HCT116 (cell line): ENCODE measurements at regions of chr3 and their contacts with region 1.

Region 1: GRCh38 chr3:19093084-19093483 is 55.2 kb upstream of the KCNH8 start:
- DNase-seq: no peak
- ATAC-seq: no peak
- H3K4me3 ChIP-seq: no peak overlapping the region
- H3K27ac ChIP-seq: no peak overlapping the region
- H3K4me1 ChIP-seq: no peaks in the 10 kb centered on the region
- H3K27me3 ChIP-seq: no peaks in the 10 kb centered on the region
- CTCF ChIP-seq: no peak
- POLR2A ChIP-seq: no peak
- RAD21 ChIP-seq: no peak

Region 2: DNA sequence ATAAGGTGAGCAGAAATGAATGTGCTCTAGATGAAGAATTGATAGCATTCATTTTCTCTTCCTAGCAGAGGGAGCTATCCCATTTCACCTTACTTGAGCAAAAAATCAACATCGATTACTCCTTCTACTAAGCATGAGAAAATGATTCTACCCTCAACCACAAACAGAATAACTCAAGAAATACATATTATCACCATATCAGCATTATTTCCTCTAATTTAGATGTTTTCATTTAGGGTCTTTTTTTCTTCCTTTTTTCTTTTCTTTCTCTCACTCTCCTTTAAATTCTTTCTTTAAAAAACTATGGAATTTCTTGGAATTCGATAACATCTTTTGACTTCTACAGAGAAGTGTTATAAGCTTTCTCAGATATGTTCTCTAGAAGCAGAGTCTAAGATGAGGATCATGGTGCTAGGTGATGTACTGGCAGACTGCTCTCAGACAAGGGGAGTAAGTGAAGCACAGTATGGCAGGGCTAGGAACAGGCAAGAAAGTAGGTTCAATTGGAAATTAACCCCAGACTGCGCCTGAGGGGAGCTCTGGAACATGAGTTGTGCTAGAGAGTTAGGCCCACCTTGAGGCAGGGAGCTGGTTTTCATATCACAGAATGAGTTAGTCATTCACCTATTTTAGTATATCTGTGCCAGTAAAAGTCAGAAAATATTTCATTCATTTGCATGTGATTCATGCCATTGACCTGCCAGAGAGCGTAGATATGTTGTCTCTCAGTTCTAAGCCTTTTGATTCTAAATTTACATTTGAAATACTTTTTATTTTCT is 224.0 kb before region 1 on chr3:
- CTCF ChIA-PET with region 1: no interaction called
- POLR2A ChIA-PET with region 1: no interaction called
- RAD21 ChIA-PET with region 1: no interaction called
- intact Hi-C with region 1: no loop called
- DNase-seq: no peak
- ATAC-seq: no peak
- H3K4me3 ChIP-seq: no peak overlapping the region
- H3K27ac ChIP-seq: no peak overlapping the region
- H3K4me1 ChIP-seq: no peaks in the 10 kb centered on the region
- H3K27me3 ChIP-seq: no peaks in the 10 kb centered on the region
- CTCF ChIP-seq: no peak
- POLR2A ChIP-seq: no peak
- RAD21 ChIP-seq: no peak

Region 3: DNA sequence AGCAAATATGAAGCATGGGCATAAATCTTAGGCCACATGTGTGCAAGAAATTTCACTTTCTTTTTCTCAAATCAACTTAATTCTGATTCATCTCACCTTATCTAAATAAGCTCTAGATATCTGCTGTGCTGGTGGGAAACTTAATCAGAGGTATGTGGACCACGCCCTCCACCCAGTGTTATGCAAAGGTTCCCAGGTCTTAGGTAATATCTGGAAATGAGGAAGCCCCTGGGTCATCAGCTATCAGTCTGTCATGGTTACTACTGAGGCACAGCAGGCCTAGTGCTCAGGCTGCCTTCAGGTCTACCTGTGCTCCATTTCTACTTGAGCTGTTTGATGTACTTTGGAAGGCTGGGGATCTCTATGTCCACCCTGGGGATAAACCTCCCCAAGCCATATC is 79.2 kb before region 1 on chr3:
- CTCF ChIA-PET with region 1: no interaction called
- POLR2A ChIA-PET with region 1: no interaction called
- RAD21 ChIA-PET with region 1: no interaction called
- intact Hi-C with region 1: loop called (anchors 2 kb)
- DNase-seq: no peak
- ATAC-seq: no peak
- H3K4me3 ChIP-seq: no peak overlapping the region
- H3K27ac ChIP-seq: no peak overlapping the region
- H3K4me1 ChIP-seq: no peaks in the 10 kb centered on the region
- H3K27me3 ChIP-seq: no peaks in the 10 kb centered on the region
- CTCF ChIP-seq: no peak
- POLR2A ChIP-seq: no peak
- RAD21 ChIP-seq: no peak

Region 4: GRCh38 chr3:19114461-19114860 is 21.4 kb after region 1 on chr3:
- CTCF ChIA-PET with region 1: no interaction called
- POLR2A ChIA-PET with region 1: no interaction called
- RAD21 ChIA-PET with region 1: no interaction called
- intact Hi-C with region 1: no loop called
- DNase-seq: no peak
- ATAC-seq: no peak
- H3K4me3 ChIP-seq: no peak overlapping the region
- H3K27ac ChIP-seq: no peak overlapping the region
- H3K4me1 ChIP-seq: no peaks in the 10 kb centered on the region
- H3K27me3 ChIP-seq: no peaks in the 10 kb centered on the region
- CTCF ChIP-seq: no peak
- POLR2A ChIP-seq: no peak
- RAD21 ChIP-seq: no peak

Region 5: DNA sequence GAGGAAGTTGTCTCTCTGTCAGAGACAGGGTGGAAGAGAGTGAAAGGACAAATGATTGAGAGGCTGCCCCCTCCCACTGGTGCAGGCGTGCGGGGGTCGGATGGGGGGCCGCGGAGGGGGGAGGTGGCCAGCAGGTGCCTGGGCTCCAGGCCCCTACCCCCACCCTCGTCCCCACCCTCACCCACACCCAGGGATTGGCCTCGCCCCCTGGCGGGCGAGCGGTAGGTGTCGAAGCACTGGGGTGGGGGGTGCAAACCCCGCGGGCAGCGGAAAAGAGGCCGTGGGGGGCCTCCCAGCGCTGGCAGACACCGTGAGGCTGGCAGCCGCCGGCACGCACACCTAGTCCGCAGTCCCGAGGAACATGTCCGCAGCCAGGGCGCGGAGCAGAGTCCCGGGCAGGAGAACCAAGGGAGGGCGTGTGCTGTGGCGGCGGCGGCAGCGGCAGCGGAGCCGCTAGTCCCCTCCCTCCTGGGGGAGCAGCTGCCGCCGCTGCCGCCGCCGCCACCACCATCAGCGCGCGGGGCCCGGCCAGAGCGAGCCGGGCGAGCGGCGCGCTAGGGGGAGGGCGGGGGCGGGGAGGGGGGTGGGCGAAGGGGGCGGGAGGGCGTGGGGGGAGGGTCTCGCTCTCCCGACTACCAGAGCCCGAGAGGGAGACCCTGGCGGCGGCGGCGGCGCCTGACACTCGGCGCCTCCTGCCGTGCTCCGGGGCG is 946.8 kb after region 1 on chr3 and contains the start of gene KAT2B:
- CTCF ChIA-PET with region 1: no interaction called
- POLR2A ChIA-PET with region 1: no interaction called
- RAD21 ChIA-PET with region 1: no interaction called
- intact Hi-C with region 1: no loop called
- DNase-seq: no peak
- ATAC-seq: peak; percentile 76
- H3K4me3 ChIP-seq: peak within 1 kb of the TSS; percentile 54 to 66
- H3K27ac ChIP-seq: peak within 1 kb of the TSS; percentile 53; the same call in 1 of the 2 replicates
- H3K4me1 ChIP-seq: peaks cover 8 to 20% of the 10 kb centered on the region in 2 experiments; a peak in 3 of 4 replicates
- H3K27me3 ChIP-seq: no peaks in the 10 kb centered on the region
- CTCF ChIP-seq: peak in 2 of 3 experiments; percentile 50 to 56; a peak in 4 of 6 replicates
- POLR2A ChIP-seq: no peak
- RAD21 ChIP-seq: no peak
- total RNA-seq, gene KAT2B: 3.7 TPM